GM12878 (cell line): ENCODE measurements at regions of chr6 and their contacts with region 1.

Region 1: DNA sequence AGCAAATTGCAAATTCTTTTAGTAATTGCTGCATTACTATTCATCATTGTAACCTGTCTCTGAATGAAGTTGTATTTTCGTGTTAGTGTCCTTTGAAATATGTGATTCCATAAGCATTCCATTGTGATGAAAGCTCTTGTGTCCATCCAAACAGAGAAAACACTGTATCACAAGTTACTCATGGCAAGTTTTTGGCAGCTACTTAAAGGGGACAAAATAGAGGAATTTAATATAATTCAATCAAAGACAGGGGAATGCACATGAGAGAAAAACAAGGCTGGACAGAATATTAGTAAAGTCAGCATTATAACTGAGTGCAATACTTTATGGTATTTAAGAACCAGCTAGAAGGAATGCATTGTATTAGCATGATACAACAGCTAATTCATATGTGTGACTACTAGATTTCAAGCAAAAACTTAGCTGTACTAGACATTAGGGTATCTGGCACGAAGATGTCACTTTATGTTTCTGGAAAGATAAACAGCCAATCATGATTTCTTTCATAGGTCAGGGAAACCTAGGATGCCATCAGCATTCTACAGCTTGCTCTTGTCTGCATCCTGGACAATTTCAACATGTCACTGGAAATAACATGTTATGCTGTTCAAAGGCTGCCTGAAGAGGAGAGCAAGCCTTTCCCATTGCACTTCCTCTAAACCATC is 270.6 kb upstream of the MARCKS start:
- DNase-seq: no peak
- ATAC-seq: no peak
- H3K4me3 ChIP-seq: no peak overlapping the region
- H3K27ac ChIP-seq: no peak overlapping the region
- H3K4me1 ChIP-seq: no peaks in the 10 kb centered on the region
- H3K27me3 ChIP-seq: no peaks in the 10 kb centered on the region
- CTCF ChIP-seq: no peak
- EP300 ChIP-seq: no peak
- POLR2A ChIP-seq: no peak
- RAD21 ChIP-seq: no peak

Region 2: GRCh38 chr6:113620386-113620785 is 33.8 kb after region 1 on chr6:
- CTCF ChIA-PET with region 1: no interaction called
- POLR2A ChIA-PET with region 1: no interaction called
- RAD21 ChIA-PET with region 1: no interaction called
- SMC1A ChIA-PET with region 1: interaction called, 10 read pairs
- in situ Hi-C with region 1: no loop called
- intact Hi-C with region 1: no loop called
- DNase-seq: no peak
- ATAC-seq: no peak
- H3K4me3 ChIP-seq: no peak overlapping the region
- H3K27ac ChIP-seq: no peak overlapping the region
- H3K4me1 ChIP-seq: peaks cover 25% of the 10 kb centered on the region
- H3K27me3 ChIP-seq: no peaks in the 10 kb centered on the region
- CTCF ChIP-seq: no peak
- EP300 ChIP-seq: no peak
- POLR2A ChIP-seq: no peak
- RAD21 ChIP-seq: no peak